CD8-positive, alpha-beta T cell (primary cell): ENCODE measurements at regions of chr19 and their contacts with region 1.

Region 1: GRCh38 chr19:37077934-37078725 is at the start of gene ZNF420:
- DNase-seq: peak; percentile 78 to 96 (median 89)
- ATAC-seq: peak; percentile 88
- H3K4me3 ChIP-seq: peak within 1 kb of the TSS; percentile 60 to 71
- H3K4me3 Mint-ChIP-seq: peak within 1 kb of the TSS; percentile 89
- H3K27ac ChIP-seq: peak within 1 kb of the TSS; percentile 56 to 82
- H3K27ac Mint-ChIP-seq: peak within 1 kb of the TSS; percentile 92
- H3K4me1 ChIP-seq: peaks cover 9% of the 10 kb centered on the region
- H3K4me1 Mint-ChIP-seq: peaks cover 34% of the 10 kb centered on the region
- H3K27me3 ChIP-seq: no peaks in the 10 kb centered on the region
- H3K27me3 Mint-ChIP-seq: no peaks in the 10 kb centered on the region
- CTCF ChIP-seq: no peak
- total RNA-seq, gene ZNF420: 7.0 to 8.9 TPM

Region 2: GRCh38 chr19:36573020-36573885 is 504.9 kb before region 1 on chr19 and contains the start of gene ZNF529:
- CTCF ChIA-PET with region 1: no interaction called
- POLR2A ChIA-PET with region 1: no interaction called
- intact Hi-C with region 1: loop called (anchors 2 kb)
- DNase-seq: peak; percentile 75 to 98 (median 85)
- ATAC-seq: peak; percentile 93
- H3K4me3 ChIP-seq: peak within 1 kb of the TSS; percentile 87 to 99
- H3K4me3 Mint-ChIP-seq: peak within 1 kb of the TSS; percentile 87
- H3K27ac ChIP-seq: peak within 1 kb of the TSS; percentile 96 to 98
- H3K27ac Mint-ChIP-seq: peak within 1 kb of the TSS; percentile 99
- H3K4me1 ChIP-seq: peaks cover 19% of the 10 kb centered on the region
- H3K4me1 Mint-ChIP-seq: peaks cover 45% of the 10 kb centered on the region
- H3K27me3 ChIP-seq: no peaks in the 10 kb centered on the region
- H3K27me3 Mint-ChIP-seq: no peaks in the 10 kb centered on the region
- CTCF ChIP-seq: no peak
- total RNA-seq, gene ZNF529: 44.0 to 46.4 TPM

Region 3: GRCh38 chr19:36837906-36838783 is 240.0 kb before region 1 on chr19 and contains the start of gene ZNF790:
- CTCF ChIA-PET with region 1: no interaction called
- POLR2A ChIA-PET with region 1: no interaction called
- intact Hi-C with region 1: loop called in 1 of 2 experiments (anchors 5 kb)
- DNase-seq: peak; percentile 62 to 92 (median 81)
- ATAC-seq: peak; percentile 87
- H3K4me3 ChIP-seq: peak within 1 kb of the TSS; percentile 86 to 91
- H3K4me3 Mint-ChIP-seq: no peak within 1 kb of the TSS
- H3K27ac ChIP-seq: peak within 1 kb of the TSS; percentile 88 to 97
- H3K27ac Mint-ChIP-seq: no peak within 1 kb of the TSS
- H3K4me1 ChIP-seq: peaks cover 17% of the 10 kb centered on the region
- H3K4me1 Mint-ChIP-seq: peaks cover 21% of the 10 kb centered on the region
- H3K27me3 ChIP-seq: no peaks in the 10 kb centered on the region
- H3K27me3 Mint-ChIP-seq: no peaks in the 10 kb centered on the region
- CTCF ChIP-seq: no peak
- total RNA-seq, gene ZNF790: 2.1 to 3.6 TPM

Region 4: DNA sequence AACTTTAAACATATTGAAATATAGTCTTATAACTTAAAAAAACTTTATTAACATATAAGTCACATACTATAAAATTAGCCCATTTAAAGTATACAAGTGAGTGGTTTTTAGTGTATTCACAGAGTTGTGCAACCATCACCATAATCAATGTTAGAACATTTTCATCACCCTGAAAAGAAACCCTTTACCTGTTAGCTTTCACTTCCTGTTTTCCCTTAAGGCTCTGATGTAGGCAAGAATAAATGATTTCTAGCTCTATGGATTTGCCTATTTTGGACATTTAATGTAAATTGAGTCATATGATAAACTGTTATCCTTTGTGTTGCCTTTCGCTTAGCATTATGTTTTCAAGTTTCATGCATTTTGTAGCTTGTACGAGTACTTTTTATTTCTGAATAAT is 146.4 kb before region 1 on chr19:
- CTCF ChIA-PET with region 1: no interaction called
- POLR2A ChIA-PET with region 1: no interaction called
- intact Hi-C with region 1: no loop called
- DNase-seq: no peak
- ATAC-seq: no peak
- H3K4me3 ChIP-seq: no peak overlapping the region
- H3K4me3 Mint-ChIP-seq: no peak overlapping the region
- H3K27ac ChIP-seq: no peak overlapping the region
- H3K27ac Mint-ChIP-seq: no peak overlapping the region
- H3K4me1 ChIP-seq: no peaks in the 10 kb centered on the region
- H3K4me1 Mint-ChIP-seq: peaks cover 1% of the 10 kb centered on the region
- H3K27me3 ChIP-seq: no peaks in the 10 kb centered on the region
- H3K27me3 Mint-ChIP-seq: no peaks in the 10 kb centered on the region
- CTCF ChIP-seq: no peak

Region 5: GRCh38 chr19:37114020-37114419 is 35.9 kb after region 1 on chr19:
- CTCF ChIA-PET with region 1: no interaction called
- POLR2A ChIA-PET with region 1: no interaction called
- intact Hi-C with region 1: no loop called
- DNase-seq: no peak
- ATAC-seq: no peak
- H3K4me3 ChIP-seq: no peak overlapping the region
- H3K4me3 Mint-ChIP-seq: no peak overlapping the region
- H3K27ac ChIP-seq: no peak overlapping the region
- H3K27ac Mint-ChIP-seq: no peak overlapping the region
- H3K4me1 ChIP-seq: no peaks in the 10 kb centered on the region
- H3K4me1 Mint-ChIP-seq: no peaks in the 10 kb centered on the region
- H3K27me3 ChIP-seq: no peaks in the 10 kb centered on the region
- H3K27me3 Mint-ChIP-seq: no peaks in the 10 kb centered on the region
- CTCF ChIP-seq: no peak

Region 6: GRCh38 chr19:37172368-37173366 is 94.5 kb after region 1 on chr19 and contains the start of gene ZNF585A:
- CTCF ChIA-PET with region 1: no interaction called
- POLR2A ChIA-PET with region 1: no interaction called
- intact Hi-C with region 1: loop called (anchors 1 kb)
- DNase-seq: peak; percentile 83 to 98 (median 90)
- ATAC-seq: peak; percentile 99
- H3K4me3 ChIP-seq: peak within 1 kb of the TSS; percentile 85 to 91
- H3K4me3 Mint-ChIP-seq: no peak within 1 kb of the TSS
- H3K27ac ChIP-seq: peak within 1 kb of the TSS; percentile 74 to 89
- H3K27ac Mint-ChIP-seq: no peak within 1 kb of the TSS
- H3K4me1 ChIP-seq: no peaks in the 10 kb centered on the region
- H3K4me1 Mint-ChIP-seq: peaks cover 6% of the 10 kb centered on the region
- H3K27me3 ChIP-seq: no peaks in the 10 kb centered on the region
- H3K27me3 Mint-ChIP-seq: no peaks in the 10 kb centered on the region
- CTCF ChIP-seq: no peak
- total RNA-seq, gene ZNF585A: 5.3 TPM

Region 7: GRCh38 chr19:37370880-37371661 is 292.9 kb after region 1 on chr19 and contains the start of gene ZNF527:
- CTCF ChIA-PET with region 1: no interaction called
- POLR2A ChIA-PET with region 1: interaction called, 4 read pairs
- intact Hi-C with region 1: loop called (anchors 1 kb)
- DNase-seq: peak; percentile 94 to 98 (median 97)
- ATAC-seq: peak; percentile 92
- H3K4me3 ChIP-seq: peak within 1 kb of the TSS; percentile 80 to 95
- H3K4me3 Mint-ChIP-seq: peak within 1 kb of the TSS; percentile 99
- H3K27ac ChIP-seq: peak within 1 kb of the TSS; percentile 82 to 90
- H3K27ac Mint-ChIP-seq: peak within 1 kb of the TSS; percentile 96
- H3K4me1 ChIP-seq: peaks cover 7% of the 10 kb centered on the region
- H3K4me1 Mint-ChIP-seq: peaks cover 20% of the 10 kb centered on the region
- H3K27me3 ChIP-seq: no peaks in the 10 kb centered on the region
- H3K27me3 Mint-ChIP-seq: no peaks in the 10 kb centered on the region
- CTCF ChIP-seq: no peak
- total RNA-seq, gene ZNF527: 12.9 to 14.2 TPM